ENCODE measurements at regions of chr12 and their contacts with region 1.

Region 1: DNA sequence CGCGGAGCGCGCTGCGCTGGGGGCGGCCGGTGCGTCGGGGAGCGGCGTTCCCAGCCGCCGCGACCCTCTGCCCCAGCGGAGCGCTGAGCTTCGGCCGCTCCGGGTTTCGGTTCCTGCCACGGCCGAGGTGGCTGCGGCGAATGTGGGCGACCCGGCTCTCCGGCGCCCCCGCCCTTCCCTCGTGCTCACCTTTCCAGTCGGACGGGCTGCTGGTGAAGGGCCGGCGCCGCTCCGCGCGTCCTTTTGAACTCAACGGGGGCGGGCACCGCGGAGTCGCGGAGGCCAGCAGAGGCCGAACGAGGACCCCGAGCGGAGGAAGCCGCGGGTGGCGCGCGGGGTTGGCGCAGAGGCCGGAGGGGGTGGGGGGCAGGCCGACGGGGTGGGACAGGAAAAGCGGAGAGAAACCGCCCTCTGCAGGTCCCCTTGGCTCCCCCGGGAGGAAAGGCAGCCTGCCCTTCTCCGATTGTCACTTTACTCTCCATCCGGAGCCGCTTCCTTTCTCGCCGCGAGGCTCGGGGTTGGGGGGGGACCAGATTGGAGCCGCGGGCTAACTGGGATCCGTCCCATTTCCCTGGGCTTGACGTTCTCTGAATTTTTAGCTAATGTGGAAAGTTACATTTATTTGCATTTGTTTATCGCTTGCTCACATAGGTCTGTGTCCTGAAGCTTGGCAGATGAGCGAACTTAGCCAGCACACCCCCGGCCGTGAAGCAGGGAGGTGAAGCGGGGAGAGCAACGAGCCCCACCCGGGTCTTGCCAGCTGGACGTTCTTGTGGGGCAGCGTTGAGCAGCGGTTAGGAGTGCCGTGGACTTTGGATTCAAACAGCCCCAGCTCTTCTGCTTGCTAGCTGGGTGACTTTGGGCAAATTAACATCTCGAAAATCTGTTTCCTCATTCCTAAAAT is at the start of gene SMAGP:
- DNase-seq: peak; percentile 44
- H3K27ac ChIP-seq: peak within 1 kb of the TSS; percentile 75
- CTCF ChIP-seq: no peak

Region 2: GRCh38 chr12:51341259-51342007 is 71.1 kb after region 1 on chr12:
- CTCF ChIA-PET with region 1: interaction called, 27 read pairs
- POLR2A ChIA-PET with region 1: no interaction called
- DNase-seq: peak; percentile 68
- H3K27ac ChIP-seq: no peak overlapping the region
- CTCF ChIP-seq: peak; percentile 97